ENCODE measurements at regions of chr2 and their contacts with region 1.

Region 1: DNA sequence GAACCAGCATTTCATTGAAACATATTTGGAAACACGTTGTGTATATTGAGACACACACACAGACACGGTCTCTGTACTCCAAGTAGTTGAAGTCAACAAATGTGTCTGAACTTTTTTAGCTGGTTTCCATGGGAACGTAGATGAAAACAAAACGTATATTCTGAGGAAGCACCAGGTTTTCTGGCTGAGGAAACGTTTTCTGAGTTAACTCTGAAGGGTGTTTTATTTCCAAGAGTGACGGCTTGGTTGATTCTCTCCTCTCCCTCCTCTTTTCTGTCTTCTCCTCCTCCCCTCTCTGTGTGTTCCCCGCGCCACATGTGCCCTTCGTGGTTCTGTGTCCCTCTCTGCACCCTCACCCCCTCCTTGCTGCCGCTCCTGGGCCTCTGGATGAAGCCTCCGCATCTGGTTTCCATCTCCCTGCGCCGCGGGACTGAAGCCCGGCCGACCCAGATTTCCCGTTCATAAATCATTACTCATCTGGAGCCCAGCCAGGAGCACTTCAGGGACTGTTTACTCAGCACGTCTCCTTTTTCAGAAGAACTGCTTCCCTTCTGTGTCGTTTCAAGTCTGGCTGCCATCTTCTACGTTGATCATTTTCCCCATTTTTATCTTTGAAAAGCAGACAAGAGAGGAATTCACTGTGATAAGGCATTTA is 122.7 kb downstream of the COL6A3 start:
- DNase-seq: peak; percentile 97
- ATAC-seq: peak; percentile 96 to 97

Region 2: DNA sequence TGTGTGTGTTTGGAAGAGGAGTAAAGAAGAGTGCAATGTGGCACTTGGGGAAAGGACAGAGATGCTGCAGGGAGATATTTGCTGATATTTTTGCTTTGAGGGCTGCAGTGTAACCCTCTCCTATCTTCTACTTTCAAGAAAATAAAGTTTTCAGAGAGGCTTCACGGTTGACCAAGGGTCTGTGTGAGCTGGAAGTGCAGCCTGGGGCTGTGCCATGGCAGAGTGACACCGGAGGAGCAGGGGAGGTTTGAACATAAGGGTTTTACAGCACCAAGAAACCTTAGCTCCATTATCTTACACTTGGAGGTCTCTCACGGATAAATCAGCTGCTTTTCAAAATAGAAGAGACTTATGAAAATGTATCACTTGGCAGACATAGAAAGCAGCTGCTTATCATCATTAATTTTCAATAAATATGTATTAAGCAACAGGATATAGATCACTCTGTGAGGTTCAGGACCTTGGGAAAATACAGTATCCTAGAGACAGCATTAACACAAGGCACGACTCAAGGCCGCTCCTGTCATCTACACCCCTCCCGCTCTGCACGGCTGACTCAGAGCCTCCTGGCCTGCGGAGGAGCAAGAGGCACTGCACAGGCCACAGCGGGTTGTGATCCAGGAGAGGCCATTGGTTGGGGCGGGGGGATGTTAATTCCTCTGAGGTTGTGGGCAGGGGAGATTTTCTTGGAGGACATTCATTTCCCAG is 77.8 kb before region 1 on chr2:
- intact Hi-C with region 1: loop called in 1 of 2 experiments (anchors 5 kb)
- DNase-seq: peak; percentile 68
- ATAC-seq: peak; percentile 60 to 80

Region 3: DNA sequence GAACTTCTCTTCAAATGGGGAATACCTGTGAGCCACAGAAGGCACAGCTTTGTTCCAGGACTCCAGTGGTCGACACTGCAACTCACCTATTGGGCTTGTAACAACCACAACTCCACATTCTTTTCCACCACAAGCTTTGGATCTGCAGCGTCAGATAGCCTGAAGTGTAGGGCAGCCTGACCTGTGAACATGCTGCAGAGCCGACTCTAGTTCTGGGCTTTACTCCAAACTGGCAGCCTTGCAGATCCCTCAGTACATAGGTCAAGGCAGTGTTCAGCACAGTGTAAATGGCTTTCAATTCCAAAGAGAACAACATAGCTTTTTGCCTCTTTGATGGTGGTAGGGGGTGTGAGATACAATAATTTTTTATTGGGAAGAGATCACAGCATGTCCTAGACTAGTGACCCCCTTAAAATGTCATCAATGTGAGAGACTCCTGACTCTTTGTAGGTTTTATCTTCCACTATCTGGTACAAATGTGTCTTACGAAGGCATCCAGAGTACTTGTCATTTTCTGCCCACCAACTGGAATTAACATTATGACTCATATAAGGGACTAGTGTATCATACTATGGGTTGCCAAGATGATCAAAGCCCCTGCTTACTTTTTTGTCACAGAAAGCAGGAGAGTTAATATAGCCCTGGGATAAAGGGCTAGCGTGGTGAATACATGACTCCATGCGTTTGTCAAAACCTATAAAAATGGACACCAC is 55.7 kb before region 1 on chr2:
- intact Hi-C with region 1: loop called in 1 of 2 experiments (anchors 2 kb)
- DNase-seq: peak; percentile 59
- ATAC-seq: peak; percentile 88 to 93

Measured in left cardiac atrium (tissue), 4 donors.